Adrenal gland (tissue), 19 donors: ENCODE measurements at regions of chr20 and their contacts with region 1.

Region 1: DNA sequence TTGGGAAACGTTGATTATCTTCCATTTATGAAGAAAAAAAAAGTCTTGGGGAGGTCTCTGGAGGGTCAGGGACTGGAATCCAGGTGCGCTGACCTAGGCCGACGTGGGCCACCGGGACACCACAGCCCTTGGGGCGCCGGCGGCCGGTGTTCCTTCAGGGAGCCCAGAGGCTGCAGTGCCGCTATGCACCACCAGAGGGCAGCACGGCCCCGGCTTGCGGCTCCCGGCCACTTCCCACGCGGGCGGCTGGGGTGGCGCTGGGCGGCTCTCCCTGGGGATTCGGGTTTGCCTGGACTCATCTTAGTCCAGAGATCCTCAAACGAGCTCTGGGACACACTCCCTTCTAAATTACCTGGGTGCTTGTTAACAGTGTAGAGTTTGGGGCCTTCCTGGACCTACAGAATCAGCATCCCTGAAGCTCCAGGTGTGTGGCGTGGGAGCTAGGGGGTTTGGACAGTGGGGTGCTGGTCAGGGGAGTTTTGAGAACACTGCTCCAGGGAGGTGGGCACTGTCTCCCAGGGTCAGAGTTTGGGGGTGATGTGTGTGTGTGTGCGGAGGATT is 23.0 kb upstream of the GTSF1L start:
- DNase-seq: peak; percentile 53 to 88 (median 79)
- H3K4me3 ChIP-seq: no peak overlapping the region
- H3K27ac ChIP-seq: no peak overlapping the region
- H3K4me1 ChIP-seq: no peaks in the 10 kb centered on the region
- H3K27me3 ChIP-seq: peaks cover 8% of the 10 kb centered on the region
- CTCF ChIP-seq: peak; percentile 87 to 100 (median 98)
- POLR2A ChIP-seq: no peak

Region 2: DNA sequence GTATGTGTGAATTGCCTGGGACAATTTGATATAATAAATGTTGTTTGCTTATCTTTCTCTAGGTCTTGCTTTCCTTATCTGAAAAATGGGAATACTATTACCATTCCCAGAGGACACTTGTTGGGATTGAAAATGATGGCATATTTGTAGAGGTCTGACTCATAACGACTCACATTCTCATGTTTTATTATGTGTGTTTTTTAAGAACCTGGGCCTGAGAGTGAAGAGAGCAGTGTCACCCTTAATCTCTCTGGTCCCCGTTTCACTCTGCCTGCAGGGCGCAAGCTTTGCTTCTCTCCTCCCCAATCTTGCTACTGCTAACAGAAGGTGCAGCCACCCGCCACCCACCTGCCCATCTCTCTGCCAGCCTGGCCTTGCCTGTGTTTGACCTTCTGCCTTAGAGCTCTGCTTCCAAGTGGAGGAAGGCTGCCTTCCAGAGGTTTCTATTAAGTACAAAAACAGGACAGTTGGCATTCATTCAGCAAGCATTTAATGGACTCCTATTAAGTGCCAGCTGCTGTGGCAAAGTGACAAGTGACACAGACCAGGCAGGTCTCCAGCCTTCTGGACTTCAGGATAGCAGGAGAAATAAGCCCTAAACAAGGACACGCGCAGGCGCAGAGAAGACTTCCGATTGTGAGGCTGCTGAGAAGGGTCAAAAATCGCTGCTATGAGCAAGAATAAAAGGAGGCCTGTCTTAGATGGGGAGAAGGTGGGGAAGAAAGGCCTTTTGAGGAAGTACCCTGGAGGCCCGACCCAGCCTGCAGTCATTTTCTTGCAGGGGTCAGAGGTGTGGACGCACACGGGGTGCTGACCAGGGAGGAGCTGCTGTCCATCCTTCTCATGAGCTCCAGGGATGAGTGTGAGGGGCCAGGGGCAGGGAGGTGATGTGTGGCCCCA is 324.7 kb after region 1 on chr20:
- intact Hi-C with region 1: loop called in 1 of 2 experiments (anchors 5 kb)
- DNase-seq: peak in 6 of 7 donors; percentile 29 to 96 (median 46)
- H3K4me3 ChIP-seq: no peak overlapping the region
- H3K27ac ChIP-seq: no peak overlapping the region
- H3K4me1 ChIP-seq: peaks cover 0 to 7% of the 10 kb centered on the region in 2 donors
- H3K27me3 ChIP-seq: no peaks in the 10 kb centered on the region
- CTCF ChIP-seq: no peak
- POLR2A ChIP-seq: no peak

Region 3: GRCh38 chr20:44080646-44081267 is 330.9 kb after region 1 on chr20:
- intact Hi-C with region 1: loop called (anchors 2 to 5 kb)
- DNase-seq: peak; percentile 66 to 94 (median 79)
- H3K4me3 ChIP-seq: no peak overlapping the region
- H3K27ac ChIP-seq: no peak overlapping the region
- H3K4me1 ChIP-seq: no peaks in the 10 kb centered on the region
- H3K27me3 ChIP-seq: no peaks in the 10 kb centered on the region
- CTCF ChIP-seq: peak; percentile 98 to 99 (median 99)
- POLR2A ChIP-seq: no peak